Panc1 (cell line): ENCODE measurements at regions of chr10 and their contacts with region 1.

Region 1: DNA sequence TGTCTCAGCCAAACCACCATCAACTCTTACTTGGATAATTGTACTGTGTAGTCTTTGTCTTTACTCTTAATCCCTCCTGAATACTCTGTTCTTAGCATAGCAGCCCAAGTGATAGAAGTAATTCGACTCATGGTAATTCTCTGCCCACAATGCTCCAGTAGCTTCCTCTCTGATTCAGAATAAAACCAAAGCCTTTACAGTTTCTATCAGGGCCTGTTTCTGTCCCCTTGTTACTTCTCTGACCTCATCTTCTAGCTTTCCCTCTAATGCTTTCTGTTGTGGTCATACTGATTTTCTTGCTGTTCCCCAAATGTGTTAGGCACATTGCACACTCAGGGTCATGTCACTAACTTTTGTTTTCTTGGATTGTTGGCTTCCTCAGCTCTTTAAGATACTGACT is 8.0 kb downstream of the ZNF518A start:
- DNase-seq: no peak
- ATAC-seq: no peak
- H3K4me3 ChIP-seq: no peak overlapping the region
- H3K27ac ChIP-seq: no peak overlapping the region
- H3K4me1 ChIP-seq: no peaks in the 10 kb centered on the region
- H3K27me3 ChIP-seq: no peaks in the 10 kb centered on the region
- CTCF ChIP-seq: no peak

Region 2: DNA sequence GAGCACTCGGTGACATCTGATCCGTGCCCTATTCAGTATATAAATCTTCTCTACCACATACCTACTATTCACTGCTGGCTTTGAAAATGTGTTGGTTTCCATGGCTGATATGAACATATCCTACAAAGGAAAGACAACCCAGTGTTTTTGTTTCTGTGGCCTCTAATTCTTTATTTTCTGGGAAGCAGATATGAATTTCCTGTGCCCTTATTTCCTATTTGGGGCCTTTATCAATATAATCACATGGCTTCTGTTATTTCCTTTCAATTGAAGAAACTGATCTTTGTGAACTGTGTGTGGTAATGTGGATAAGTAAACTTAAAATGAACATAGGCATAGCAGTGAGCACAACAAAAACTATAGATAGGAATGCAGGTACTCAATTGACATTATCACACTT is 84.1 kb before region 1 on chr10:
- CTCF ChIA-PET with region 1: no interaction called
- POLR2A ChIA-PET with region 1: interaction called, 17 read pairs
- in situ Hi-C with region 1: no loop called
- intact Hi-C with region 1: no loop called
- DNase-seq: no peak
- ATAC-seq: no peak
- H3K4me3 ChIP-seq: no peak overlapping the region
- H3K27ac ChIP-seq: no peak overlapping the region
- H3K4me1 ChIP-seq: no peaks in the 10 kb centered on the region
- H3K27me3 ChIP-seq: no peaks in the 10 kb centered on the region
- CTCF ChIP-seq: no peak

Region 3: DNA sequence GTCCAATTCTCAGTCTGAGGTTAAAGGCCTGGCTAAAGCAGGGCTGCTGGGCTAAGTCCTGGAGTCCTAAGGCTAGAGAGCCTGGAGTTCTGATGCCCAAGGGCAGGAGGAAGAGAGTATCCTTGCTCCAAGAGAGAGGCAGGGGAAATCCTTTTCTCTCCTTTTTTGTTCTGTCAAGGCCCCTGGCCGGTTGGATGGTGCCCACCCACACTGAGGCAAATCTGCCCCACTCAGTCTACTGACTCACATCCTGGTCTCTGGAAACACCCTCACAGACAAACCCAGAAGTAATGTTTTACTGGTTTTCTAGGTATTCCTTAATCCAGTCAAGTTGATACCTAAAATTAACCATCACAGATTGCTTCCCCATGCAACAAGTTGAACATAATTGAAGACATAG is 15.0 kb after region 1 on chr10:
- CTCF ChIA-PET with region 1: no interaction called
- POLR2A ChIA-PET with region 1: interaction called, 16 read pairs
- in situ Hi-C with region 1: no loop called
- intact Hi-C with region 1: no loop called
- DNase-seq: no peak
- ATAC-seq: no peak
- H3K4me3 ChIP-seq: no peak overlapping the region
- H3K27ac ChIP-seq: no peak overlapping the region
- H3K4me1 ChIP-seq: no peaks in the 10 kb centered on the region
- H3K27me3 ChIP-seq: no peaks in the 10 kb centered on the region
- CTCF ChIP-seq: no peak

Region 4: DNA sequence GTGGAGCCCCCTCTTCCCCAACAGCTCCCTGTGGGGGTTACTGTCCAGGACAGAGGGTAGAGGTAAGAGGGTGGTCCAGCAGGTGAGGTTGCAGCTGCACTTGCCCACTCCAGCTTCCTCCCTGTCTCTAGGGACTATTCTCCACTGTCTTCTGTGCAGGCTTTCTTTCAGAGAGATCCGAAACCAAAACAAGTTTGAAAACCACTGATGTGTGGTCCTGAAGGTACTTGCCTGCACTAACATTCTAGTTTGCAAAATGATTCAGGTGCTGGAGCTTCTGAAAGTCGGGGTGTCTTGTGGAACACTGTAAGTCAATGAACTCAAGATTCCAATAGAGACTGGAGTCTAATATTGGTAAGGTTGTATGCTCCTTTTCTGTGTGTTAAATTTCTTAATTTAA is 70.2 kb after region 1 on chr10:
- CTCF ChIA-PET with region 1: no interaction called
- POLR2A ChIA-PET with region 1: no interaction called
- in situ Hi-C with region 1: no loop called
- intact Hi-C with region 1: no loop called
- DNase-seq: no peak
- ATAC-seq: no peak
- H3K4me3 ChIP-seq: no peak overlapping the region
- H3K27ac ChIP-seq: no peak overlapping the region
- H3K4me1 ChIP-seq: no peaks in the 10 kb centered on the region
- H3K27me3 ChIP-seq: peaks cover 14% of the 10 kb centered on the region
- CTCF ChIP-seq: no peak